Activated CD4-positive, alpha-beta T cell treated with anti-CD3 and anti-CD28 coated beads, Interleukin-2, amount 10 ng/mL, durations not matched to agents 24 days and 14 days (primary cell): ENCODE measurements at regions of chr10 and their contacts with region 1.

Region 1: DNA sequence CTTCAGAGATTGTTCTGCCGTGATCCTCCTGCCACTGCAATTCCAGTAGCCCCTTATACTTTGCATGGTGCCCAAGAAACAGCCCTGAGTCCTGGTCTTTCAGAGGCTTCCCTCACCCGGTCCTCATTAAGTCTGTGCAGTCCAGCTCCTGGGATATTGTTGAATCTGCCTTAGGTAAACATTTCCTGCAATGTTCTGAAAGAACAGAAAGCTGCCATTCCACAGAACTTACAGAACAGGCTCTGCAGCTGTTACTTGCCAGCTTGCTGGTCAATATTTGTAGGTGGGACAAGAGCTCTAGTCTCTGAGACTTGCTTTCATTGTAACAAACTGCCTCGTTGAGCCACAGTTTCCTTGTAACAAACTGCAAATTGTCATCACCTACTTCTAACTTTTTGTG is 115.0 kb upstream of the KIF5B start:
- DNase-seq: no peak
- H3K4me3 Mint-ChIP-seq: no peak overlapping the region
- H3K27ac Mint-ChIP-seq: no peak overlapping the region
- H3K4me1 Mint-ChIP-seq: peaks cover 4% of the 10 kb centered on the region
- H3K27me3 Mint-ChIP-seq: no peaks in the 10 kb centered on the region

Region 2: GRCh38 chr10:32104622-32105509 is 66.3 kb before region 1 on chr10:
- intact Hi-C with region 1: loop called (anchors 10 kb)
- DNase-seq: no peak
- H3K4me3 Mint-ChIP-seq: no peak overlapping the region
- H3K27ac Mint-ChIP-seq: no peak overlapping the region
- H3K4me1 Mint-ChIP-seq: no peaks in the 10 kb centered on the region
- H3K27me3 Mint-ChIP-seq: peaks cover 15% of the 10 kb centered on the region

Region 3: DNA sequence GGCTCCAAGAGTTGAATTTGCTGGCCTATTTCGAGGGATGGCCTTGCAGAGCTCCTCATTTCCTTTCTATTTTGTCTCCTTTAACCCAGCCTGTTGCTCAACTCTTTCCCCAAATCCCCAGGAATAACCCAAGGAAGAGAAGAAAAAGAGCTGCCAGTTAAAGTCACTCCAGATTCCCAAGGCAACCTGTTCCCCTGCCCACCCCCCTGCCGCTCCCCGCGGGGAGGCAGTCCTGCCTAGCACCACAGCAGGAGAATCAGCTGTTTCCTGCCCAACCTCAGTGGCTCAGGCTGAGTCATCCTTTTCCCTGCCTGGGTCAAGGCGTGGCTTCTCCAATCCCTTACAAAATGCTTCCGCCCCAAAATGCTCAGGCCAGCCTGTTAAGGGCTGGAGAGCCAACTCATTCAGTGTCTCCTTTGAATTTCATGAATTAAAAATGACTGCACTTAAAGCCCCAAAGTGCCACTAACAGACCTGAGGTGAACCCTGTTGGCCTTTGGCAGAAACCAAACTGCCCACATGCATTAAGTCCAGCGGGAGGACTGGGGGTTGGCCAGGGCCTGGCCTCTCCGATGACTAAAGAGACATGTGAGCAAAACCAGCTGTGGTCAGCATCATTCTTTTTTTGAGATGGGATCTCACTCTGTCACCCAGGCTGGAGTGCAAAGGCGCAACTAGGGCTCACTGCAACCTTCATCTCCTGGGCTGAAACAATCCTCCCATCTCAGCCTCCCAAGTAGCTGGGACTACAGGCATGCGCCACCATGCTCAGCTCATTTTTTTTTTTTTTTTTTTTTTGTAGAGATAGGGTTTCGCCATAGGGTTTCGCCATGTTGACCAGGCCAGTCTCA is 31.8 kb before region 1 on chr10:
- intact Hi-C with region 1: no loop called
- DNase-seq: peak; percentile 77
- H3K4me3 Mint-ChIP-seq: peak overlapping the region; percentile 3
- H3K27ac Mint-ChIP-seq: peak overlapping the region; percentile 9
- H3K4me1 Mint-ChIP-seq: peaks cover 6% of the 10 kb centered on the region
- H3K27me3 Mint-ChIP-seq: no peaks in the 10 kb centered on the region

Region 4: GRCh38 chr10:32413513-32413912 is 242.3 kb after region 1 on chr10:
- intact Hi-C with region 1: no loop called
- DNase-seq: no peak
- H3K4me3 Mint-ChIP-seq: no peak overlapping the region
- H3K27ac Mint-ChIP-seq: peak overlapping the region; percentile 1
- H3K4me1 Mint-ChIP-seq: peaks cover 6% of the 10 kb centered on the region
- H3K27me3 Mint-ChIP-seq: no peaks in the 10 kb centered on the region